ENCODE measurements at regions of chr12 and their contacts with region 1.

Region 1: DNA sequence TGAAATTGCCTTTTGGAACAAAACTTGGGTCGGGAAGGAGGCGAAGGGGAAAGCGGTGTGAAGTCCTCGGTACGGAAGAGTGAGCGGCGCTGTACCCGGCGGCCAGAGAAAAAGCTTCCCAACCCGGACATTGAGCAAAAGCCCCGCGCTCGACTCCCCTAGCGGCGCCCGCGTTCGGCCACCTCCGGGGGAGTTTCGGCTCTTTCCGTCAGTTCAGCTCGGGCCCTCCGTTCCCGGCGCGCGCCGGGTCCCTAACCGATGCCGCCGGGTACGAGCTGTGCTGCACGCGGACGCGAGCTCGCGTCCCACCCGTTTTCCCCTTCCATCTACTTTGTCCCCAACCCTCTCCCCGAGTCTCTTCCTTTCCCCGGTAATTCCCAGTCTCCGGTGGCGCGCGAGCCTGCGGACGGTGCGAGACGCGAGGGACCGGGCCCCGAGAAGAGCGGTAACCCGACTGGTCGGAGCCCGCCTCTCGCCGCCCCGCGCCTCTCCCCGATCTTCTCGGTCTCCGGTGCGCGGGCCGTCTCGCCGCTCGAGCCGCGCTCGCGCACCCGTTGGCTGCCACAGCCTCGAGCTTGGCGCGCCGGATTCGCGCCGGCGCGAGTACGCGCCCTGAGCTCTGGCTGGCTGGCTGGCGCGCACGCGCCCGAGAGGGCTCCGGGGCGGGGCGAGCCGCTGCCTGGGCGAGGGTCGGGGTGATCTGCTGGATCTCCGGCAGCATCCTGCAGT is 446 bp upstream of the SPATS2 start:
- DNase-seq: peak; percentile 91
- H3K4me3 Mint-ChIP-seq: peak overlapping the region; percentile 96
- H3K27ac Mint-ChIP-seq: peak overlapping the region; percentile 93
- H3K4me1 Mint-ChIP-seq: peaks cover 35% of the 10 kb centered on the region
- H3K27me3 Mint-ChIP-seq: peaks cover 2% of the 10 kb centered on the region

Region 2: DNA sequence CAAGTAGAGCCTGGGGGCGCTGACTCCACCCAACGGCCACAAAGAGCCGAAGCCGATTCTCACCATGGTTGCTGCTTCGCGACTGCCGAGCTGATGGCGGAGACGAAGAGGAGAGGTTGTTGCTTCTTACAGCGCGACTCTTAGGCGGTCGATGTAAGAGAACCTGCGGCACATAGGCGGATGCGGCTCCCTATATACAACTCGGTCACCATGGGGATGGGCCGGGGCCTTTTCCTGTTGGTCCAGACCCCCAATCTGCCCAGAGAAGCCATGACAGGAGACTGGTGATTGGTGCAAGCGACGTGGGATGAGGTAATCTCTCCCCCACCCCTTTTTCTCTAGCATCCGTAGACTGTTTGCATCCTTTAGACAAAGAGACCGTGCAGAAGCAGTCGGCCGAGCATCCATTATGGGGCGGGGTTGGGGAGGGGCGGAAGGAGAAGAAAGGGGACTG is 177.9 kb before region 1 on chr12 and contains the start of gene TUBA1A:
- CTCF ChIA-PET with region 1: no interaction called
- POLR2A ChIA-PET with region 1: interaction called, 11 read pairs
- DNase-seq: peak; percentile 98
- H3K4me3 Mint-ChIP-seq: peak within 1 kb of the TSS; percentile 81
- H3K27ac Mint-ChIP-seq: peak within 1 kb of the TSS; percentile 94
- H3K4me1 Mint-ChIP-seq: peaks cover 30% of the 10 kb centered on the region
- H3K27me3 Mint-ChIP-seq: peaks cover 3% of the 10 kb centered on the region
- total RNA-seq, gene TUBA1A: 106 to 109 TPM

Region 3: GRCh38 chr12:49304161-49304560 is 62.7 kb before region 1 on chr12:
- CTCF ChIA-PET with region 1: no interaction called
- POLR2A ChIA-PET with region 1: no interaction called
- DNase-seq: no peak
- H3K4me3 Mint-ChIP-seq: no peak overlapping the region
- H3K27ac Mint-ChIP-seq: no peak overlapping the region
- H3K4me1 Mint-ChIP-seq: peaks cover 9% of the 10 kb centered on the region
- H3K27me3 Mint-ChIP-seq: peaks cover 25% of the 10 kb centered on the region

Region 4: GRCh38 chr12:49322708-49323523 is 43.9 kb before region 1 on chr12 and contains the start of gene TROAP:
- CTCF ChIA-PET with region 1: interaction called, 11 read pairs
- POLR2A ChIA-PET with region 1: interaction called, 23 read pairs
- DNase-seq: peak; percentile 99
- H3K4me3 Mint-ChIP-seq: peak within 1 kb of the TSS; percentile 94
- H3K27ac Mint-ChIP-seq: peak within 1 kb of the TSS; percentile 86
- H3K4me1 Mint-ChIP-seq: peaks cover 33% of the 10 kb centered on the region
- H3K27me3 Mint-ChIP-seq: no peaks in the 10 kb centered on the region
- total RNA-seq, gene TROAP: 75.1 to 79.5 TPM

Region 5: DNA sequence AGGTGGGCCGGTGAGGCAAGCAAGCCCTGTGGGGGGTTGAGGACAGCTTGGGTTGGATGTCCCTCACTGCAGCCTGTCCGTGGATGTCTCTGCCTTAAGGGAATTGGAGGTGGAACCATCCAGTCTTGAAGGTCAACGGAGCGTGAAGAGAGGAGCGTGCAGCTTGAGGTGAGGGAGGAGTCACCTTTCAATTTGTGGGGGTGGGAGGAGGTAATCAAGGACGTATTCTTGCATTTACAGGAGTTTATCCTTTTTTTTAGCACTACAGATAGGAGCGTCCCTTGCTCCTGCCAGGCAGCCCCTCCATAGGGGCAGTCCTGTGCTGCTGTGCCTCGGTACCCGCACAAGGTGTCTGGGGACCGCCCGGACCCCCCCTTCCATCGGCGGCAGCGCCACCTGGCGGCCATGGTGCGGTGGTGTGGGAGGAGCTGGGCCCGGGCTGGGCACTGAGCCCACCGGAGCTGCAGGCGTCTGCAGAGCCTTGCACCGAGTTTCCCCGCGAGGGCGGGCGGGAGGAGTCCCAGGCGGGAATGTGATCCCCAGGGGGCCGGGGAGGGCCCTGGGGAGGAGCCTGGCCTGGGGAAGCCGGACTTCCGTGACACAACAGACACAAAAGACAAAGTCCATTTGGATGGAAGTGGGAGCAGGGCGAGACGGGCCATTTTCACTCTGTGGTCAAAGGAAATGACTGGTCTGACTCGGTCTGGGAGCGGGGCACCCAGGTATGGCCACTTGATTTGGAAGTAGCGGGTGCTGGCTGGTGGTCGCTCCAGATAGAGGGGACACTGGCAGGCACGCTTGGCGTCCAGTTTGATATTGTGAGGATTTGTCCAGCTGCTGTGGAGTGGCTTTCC is 19.2 kb before region 1 on chr12:
- CTCF ChIA-PET with region 1: interaction called, 27 read pairs
- POLR2A ChIA-PET with region 1: interaction called, 12 read pairs
- DNase-seq: peak; percentile 80
- H3K4me3 Mint-ChIP-seq: peak overlapping the region; percentile 57
- H3K27ac Mint-ChIP-seq: no peak overlapping the region
- H3K4me1 Mint-ChIP-seq: peaks cover 34% of the 10 kb centered on the region
- H3K27me3 Mint-ChIP-seq: peaks cover 71% of the 10 kb centered on the region

Region 6: GRCh38 chr12:49515266-49515665 is 148.4 kb after region 1 on chr12:
- CTCF ChIA-PET with region 1: interaction called, 17 read pairs
- POLR2A ChIA-PET with region 1: interaction called, 7 read pairs
- DNase-seq: no peak
- H3K4me3 Mint-ChIP-seq: no peak overlapping the region
- H3K27ac Mint-ChIP-seq: no peak overlapping the region
- H3K4me1 Mint-ChIP-seq: peaks cover 1% of the 10 kb centered on the region
- H3K27me3 Mint-ChIP-seq: no peaks in the 10 kb centered on the region

Region 7: GRCh38 chr12:49567611-49568441 is 201.0 kb after region 1 on chr12 and contains the start of gene MCRS1:
- CTCF ChIA-PET with region 1: interaction called, 6 read pairs
- POLR2A ChIA-PET with region 1: interaction called, 18 read pairs
- DNase-seq: peak; percentile 90
- H3K4me3 Mint-ChIP-seq: peak within 1 kb of the TSS; percentile 97
- H3K27ac Mint-ChIP-seq: peak within 1 kb of the TSS; percentile 89
- H3K4me1 Mint-ChIP-seq: peaks cover 65% of the 10 kb centered on the region
- H3K27me3 Mint-ChIP-seq: no peaks in the 10 kb centered on the region
- total RNA-seq, gene MCRS1: 70.5 to 73.1 TPM

Measured in activated CD4-positive, alpha-beta memory T cell treated with anti-CD3 and anti-CD28 coated beads, Interleukin-2, amount 10 ng/mL, durations not matched to agents 7 days and 5 days (primary cell).